ENCODE measurements at regions of chr4 and their contacts with region 1.

Region 1: GRCh38 chr4:84582302-84583000 is 476 bp upstream of the CDS1 start:
- DNase-seq: peak; percentile 84 to 100
- H3K4me3 ChIP-seq: peak overlapping the region; percentile 67 to 93 (median 84)
- H3K27ac ChIP-seq: peak overlapping the region; percentile 19; the same call in 1 of the 2 replicates
- H3K4me1 ChIP-seq: peaks cover 7 to 20% (median 13%) of the 10 kb centered on the region in 4 experiments; a peak in 6 of 7 replicates
- H3K27me3 ChIP-seq: peaks cover 0 to 6% (median 3%) of the 10 kb centered on the region in 4 experiments; a peak in 3 of 7 replicates
- CTCF ChIP-seq: no peak
- EP300 ChIP-seq: peak in 1 of 2 experiments; percentile 63; a peak in 1 of 3 replicates
- POLR2A ChIP-seq: peak; percentile 15 to 83
- RAD21 ChIP-seq: no peak; a peak in 2 of 4 replicates

Region 2: GRCh38 chr4:84545093-84545492 is 37.4 kb before region 1 on chr4:
- CTCF ChIA-PET with region 1: interaction called, 18 read pairs
- POLR2A ChIA-PET with region 1: no interaction called
- DNase-seq: no peak
- H3K4me3 ChIP-seq: no peak overlapping the region
- H3K27ac ChIP-seq: no peak overlapping the region
- H3K4me1 ChIP-seq: no peaks in the 10 kb centered on the region; a peak in 1 of 7 replicates
- H3K27me3 ChIP-seq: no peaks in the 10 kb centered on the region
- CTCF ChIP-seq: no peak
- EP300 ChIP-seq: no peak
- POLR2A ChIP-seq: no peak
- RAD21 ChIP-seq: no peak

Region 3: DNA sequence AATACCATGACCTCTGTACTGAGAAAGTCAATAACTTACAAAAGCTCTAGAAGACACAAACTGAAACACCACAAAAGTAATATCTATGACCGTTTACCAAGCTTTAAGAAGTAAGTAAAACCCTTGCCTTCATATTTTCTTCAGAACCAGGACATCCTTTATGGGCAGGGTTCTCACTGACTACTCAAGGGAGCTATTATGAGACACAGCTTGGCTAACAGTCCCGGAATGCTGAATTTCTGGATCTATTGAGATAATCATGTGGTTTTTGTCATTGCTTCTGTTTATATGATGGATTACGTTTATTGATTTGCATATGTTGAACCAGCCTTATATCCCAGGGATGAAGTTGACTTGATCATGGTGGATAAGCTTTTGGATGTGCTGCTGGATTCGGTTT is 19.4 kb before region 1 on chr4:
- CTCF ChIA-PET with region 1: interaction called, 27 read pairs
- POLR2A ChIA-PET with region 1: interaction called, 26 read pairs
- DNase-seq: no peak
- H3K4me3 ChIP-seq: no peak overlapping the region
- H3K27ac ChIP-seq: no peak overlapping the region
- H3K4me1 ChIP-seq: peaks cover 3 to 11% (median 8%) of the 10 kb centered on the region in 4 experiments; a peak in 4 of 7 replicates
- H3K27me3 ChIP-seq: no peaks in the 10 kb centered on the region
- CTCF ChIP-seq: no peak
- EP300 ChIP-seq: no peak
- POLR2A ChIP-seq: no peak
- RAD21 ChIP-seq: no peak

Region 4: DNA sequence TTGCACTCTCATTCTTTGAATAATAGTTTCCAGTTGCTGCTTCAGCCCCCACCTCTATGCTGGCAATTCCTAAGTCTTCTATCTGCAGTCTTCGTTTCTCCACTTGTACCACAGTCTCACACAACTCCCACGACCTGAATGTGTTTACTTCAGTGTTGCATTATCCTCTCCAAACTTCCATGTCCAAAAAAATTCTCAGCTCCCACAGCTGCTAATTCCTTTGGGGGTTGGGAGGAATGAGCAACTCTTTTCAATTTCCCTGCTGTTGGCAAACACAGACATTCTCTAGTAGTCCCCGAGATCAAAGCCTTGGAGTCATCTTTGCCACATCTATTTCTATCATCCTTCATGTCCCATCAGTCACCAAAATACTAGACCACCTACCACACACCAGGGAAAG is 14.0 kb before region 1 on chr4:
- CTCF ChIA-PET with region 1: interaction called, 27 read pairs
- POLR2A ChIA-PET with region 1: interaction called, 26 read pairs
- DNase-seq: no peak
- H3K4me3 ChIP-seq: no peak overlapping the region; a peak in 1 of 8 replicates
- H3K27ac ChIP-seq: no peak overlapping the region
- H3K4me1 ChIP-seq: peaks cover 3 to 19% (median 11%) of the 10 kb centered on the region in 4 experiments; a peak in 6 of 7 replicates
- H3K27me3 ChIP-seq: no peaks in the 10 kb centered on the region
- CTCF ChIP-seq: no peak
- EP300 ChIP-seq: no peak
- POLR2A ChIP-seq: no peak
- RAD21 ChIP-seq: no peak

Region 5: DNA sequence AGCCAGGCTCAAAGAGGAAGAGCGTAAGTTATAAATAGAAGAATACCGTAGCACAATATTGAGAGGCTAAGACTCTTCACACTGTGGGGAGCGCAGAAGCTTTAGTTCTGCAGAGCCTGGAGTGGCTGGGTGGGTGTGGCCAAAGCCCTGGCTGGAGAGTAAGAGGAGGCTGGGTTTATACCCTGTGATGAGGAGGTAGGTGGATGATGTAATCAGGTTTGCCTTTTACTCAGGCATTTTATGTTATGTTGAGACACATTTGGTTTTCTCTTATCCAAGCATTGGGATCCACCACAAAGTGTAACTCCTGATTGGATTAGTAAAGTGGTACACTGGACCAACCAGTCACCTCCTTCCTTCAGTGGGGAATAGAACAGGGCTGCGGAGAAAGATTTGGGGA is 14.4 kb after region 1 on chr4:
- CTCF ChIA-PET with region 1: interaction called, 17 read pairs
- POLR2A ChIA-PET with region 1: interaction called, 40 read pairs
- DNase-seq: no peak
- H3K4me3 ChIP-seq: no peak overlapping the region
- H3K27ac ChIP-seq: no peak overlapping the region; the same call in 1 of the 2 replicates
- H3K4me1 ChIP-seq: peaks cover 0 to 10% (median 4%) of the 10 kb centered on the region in 4 experiments; a peak in 4 of 7 replicates
- H3K27me3 ChIP-seq: no peaks in the 10 kb centered on the region
- CTCF ChIP-seq: no peak
- EP300 ChIP-seq: no peak
- POLR2A ChIP-seq: no peak
- RAD21 ChIP-seq: no peak

Region 6: DNA sequence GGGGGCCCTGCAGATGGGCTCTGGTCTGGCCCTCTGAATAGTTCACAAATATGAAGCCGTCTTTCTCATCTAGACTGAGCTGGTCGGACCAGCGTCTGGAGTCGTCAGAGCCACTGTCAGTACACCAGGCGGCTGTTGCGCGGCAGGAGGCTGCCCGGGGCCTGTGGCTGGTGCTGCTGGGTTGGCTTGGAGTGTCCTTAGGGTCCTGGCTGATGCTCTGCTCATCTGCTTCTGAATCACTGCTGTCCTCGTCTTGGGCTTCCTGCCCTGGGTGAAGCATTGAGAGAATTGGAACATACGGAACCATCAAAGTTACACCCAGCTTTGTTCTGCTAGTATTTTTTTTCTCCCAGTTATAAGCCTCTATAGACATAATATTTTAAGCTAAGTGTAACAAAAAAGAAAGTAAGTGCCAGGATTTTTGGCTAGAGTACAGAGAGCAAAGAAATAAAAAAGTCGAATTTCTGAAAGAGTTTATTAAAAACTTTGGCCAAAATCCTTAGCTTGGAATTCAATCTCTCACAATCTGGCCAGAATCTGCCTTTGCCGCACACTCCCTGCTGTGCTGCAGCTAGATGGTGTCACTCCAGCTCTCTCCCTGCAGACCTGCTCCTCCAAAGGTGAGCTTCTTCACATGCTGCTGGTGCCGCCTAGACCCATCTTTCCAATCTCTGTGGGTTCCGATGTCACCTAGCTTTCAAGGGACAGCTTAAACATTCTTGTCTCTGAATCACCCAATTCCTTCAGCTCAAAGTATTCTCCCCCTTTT is 96.7 kb after region 1 on chr4:
- CTCF ChIA-PET with region 1: interaction called, 14 read pairs
- POLR2A ChIA-PET with region 1: interaction called, 3 read pairs
- DNase-seq: no peak
- H3K4me3 ChIP-seq: no peak overlapping the region
- H3K27ac ChIP-seq: no peak overlapping the region
- H3K4me1 ChIP-seq: peaks cover 0 to 4% (median 0%) of the 10 kb centered on the region in 4 experiments; a peak in 1 of 7 replicates
- H3K27me3 ChIP-seq: no peaks in the 10 kb centered on the region
- CTCF ChIP-seq: no peak
- EP300 ChIP-seq: no peak
- POLR2A ChIP-seq: no peak
- RAD21 ChIP-seq: no peak